ENCODE measurements at regions of chr7 and their contacts with region 1.

Region 1: GRCh38 chr7:44257618-44258422 is 57.0 kb downstream of the YKT6 start:
- DNase-seq: peak; percentile 75 to 83
- ATAC-seq: peak; percentile 87 to 93 (median 91)
- H3K4me3 ChIP-seq: no peak overlapping the region
- H3K27ac ChIP-seq: peak overlapping the region; percentile 71 to 98 (median 90)
- H3K4me1 ChIP-seq: peaks cover 36 to 79% (median 68%) of the 10 kb centered on the region in 9 donors
- H3K27me3 ChIP-seq: no peaks in the 10 kb centered on the region
- CTCF ChIP-seq: peak in 6 of 9 donors; percentile 6 to 47 (median 25)

Region 2: DNA sequence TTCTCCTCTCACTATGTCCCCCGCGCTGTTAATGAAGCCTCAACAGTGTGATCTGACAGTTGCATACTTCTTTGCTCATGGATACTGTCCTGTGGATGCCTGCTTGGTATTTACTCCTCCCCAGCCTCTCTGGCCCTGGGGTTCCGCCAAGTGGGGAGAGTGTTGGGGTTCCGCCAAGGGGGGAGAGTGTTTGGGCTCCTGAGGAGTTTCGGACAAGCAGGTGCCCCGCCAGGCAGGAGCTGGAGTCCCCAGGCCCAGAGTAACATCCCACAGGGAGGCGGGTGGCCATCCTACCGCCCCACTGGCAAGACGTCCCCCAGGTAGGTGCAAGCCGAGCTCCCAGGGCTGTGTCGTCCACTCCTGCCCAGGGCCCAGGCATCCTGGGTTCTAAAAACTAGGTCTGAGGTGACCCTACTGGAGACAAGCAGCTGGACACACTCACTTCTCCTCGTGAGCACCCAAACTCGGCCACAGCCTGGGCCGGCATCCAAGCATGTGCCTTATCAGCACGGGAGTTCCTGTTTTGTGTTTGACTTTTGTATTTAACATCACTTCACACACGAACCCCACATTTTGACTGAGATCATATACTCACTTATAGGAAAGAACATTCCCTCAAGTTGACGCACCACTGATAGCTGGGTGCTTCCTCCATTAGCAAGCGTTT is 33.4 kb after region 1 on chr7:
- intact Hi-C with region 1: loop called in 2 of 10 experiments (anchors 5 kb)
- DNase-seq: peak; percentile 81 to 83
- ATAC-seq: peak; percentile 67 to 82 (median 78)
- H3K4me3 ChIP-seq: no peak overlapping the region
- H3K27ac ChIP-seq: peak overlapping the region; percentile 38 to 91 (median 76)
- H3K4me1 ChIP-seq: peaks cover 17 to 98% (median 57%) of the 10 kb centered on the region in 9 donors
- H3K27me3 ChIP-seq: peaks cover 0 to 9% (median 0%) of the 10 kb centered on the region in 7 donors
- CTCF ChIP-seq: no peak

Region 3: GRCh38 chr7:44325811-44326241 is 68.0 kb after region 1 on chr7:
- intact Hi-C with region 1: loop called in 1 of 10 experiments (anchors 5 kb)
- DNase-seq: no peak
- ATAC-seq: peak in 7 of 8 donors; percentile 10 to 39 (median 24)
- H3K4me3 ChIP-seq: peak overlapping the region in 6 of 10 donors; percentile 27 to 50 (median 34)
- H3K27ac ChIP-seq: peak overlapping the region in 2 of 10 donors; percentile 48 to 77
- H3K4me1 ChIP-seq: peaks cover 0 to 52% (median 8%) of the 10 kb centered on the region in 9 donors
- H3K27me3 ChIP-seq: peaks cover 0 to 36% (median 19%) of the 10 kb centered on the region in 7 donors
- CTCF ChIP-seq: peak in 3 of 9 donors; percentile 34 to 37 (median 37)

Measured in heart right ventricle (tissue), 16 donors.